ENCODE measurements at regions of chr1 and their contacts with region 1.

Region 1: GRCh38 chr1:117895482-117896114 is 33.8 kb downstream of the GDAP2 start:
- DNase-seq: peak; percentile 89
- ATAC-seq: peak; percentile 77
- H3K4me3 ChIP-seq: no peak overlapping the region
- H3K27ac ChIP-seq: no peak overlapping the region
- H3K4me1 ChIP-seq: no peaks in the 10 kb centered on the region
- H3K27me3 ChIP-seq: no peaks in the 10 kb centered on the region
- CTCF ChIP-seq: peak; percentile 91

Region 2: GRCh38 chr1:117512743-117513321 is 382.8 kb before region 1 on chr1:
- CTCF ChIA-PET with region 1: no interaction called
- POLR2A ChIA-PET with region 1: no interaction called
- intact Hi-C with region 1: loop called (anchors 2 kb)
- DNase-seq: peak; percentile 63
- ATAC-seq: peak; percentile 69
- H3K4me3 ChIP-seq: no peak overlapping the region
- H3K27ac ChIP-seq: no peak overlapping the region
- H3K4me1 ChIP-seq: no peaks in the 10 kb centered on the region
- H3K27me3 ChIP-seq: no peaks in the 10 kb centered on the region
- CTCF ChIP-seq: peak; percentile 83

Region 3: DNA sequence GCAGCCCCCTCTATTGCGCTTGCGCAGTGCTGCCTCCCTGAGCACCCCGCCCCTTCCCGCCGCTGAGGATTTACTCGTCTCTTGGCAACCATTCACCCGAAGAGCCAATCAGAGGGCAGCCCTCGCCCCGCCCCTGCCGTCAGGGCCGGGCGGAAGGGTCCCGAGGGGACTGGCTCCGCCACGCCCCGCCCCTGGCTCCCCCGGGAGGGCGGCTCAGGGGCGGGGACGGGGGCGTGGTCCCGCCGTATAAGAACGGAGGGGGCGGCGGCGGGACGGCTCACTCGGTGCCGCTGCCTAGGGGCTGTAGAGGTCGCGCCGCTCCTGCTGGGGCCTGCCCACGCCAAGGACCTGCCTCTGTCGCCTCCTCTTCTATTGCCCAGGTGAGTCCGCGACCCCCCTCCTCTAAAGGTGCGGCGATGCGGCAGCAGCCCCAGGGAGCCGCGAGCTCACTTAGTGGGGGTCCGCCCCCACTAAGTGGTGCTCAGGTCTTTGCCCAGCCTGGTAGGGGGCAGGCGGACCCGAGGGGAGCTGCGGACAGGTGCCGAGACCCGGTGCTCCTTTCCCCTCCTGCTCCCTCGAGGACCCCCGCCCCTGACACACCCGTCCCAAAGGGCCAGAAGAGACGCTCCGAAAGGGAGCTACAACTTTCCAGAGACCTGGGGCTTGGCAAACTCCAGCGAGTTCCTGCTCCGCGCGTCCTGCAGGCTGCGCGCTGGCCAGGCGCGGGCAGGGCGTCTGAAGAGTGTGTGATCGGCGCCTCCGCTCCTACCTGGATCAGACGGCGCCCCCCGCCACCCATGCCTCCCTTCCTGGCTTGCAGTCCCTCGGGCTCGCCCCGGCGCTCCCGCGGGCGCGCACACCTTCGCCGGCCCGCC is 289.6 kb before region 1 on chr1 and contains the start of gene TENT5C:
- CTCF ChIA-PET with region 1: no interaction called
- POLR2A ChIA-PET with region 1: no interaction called
- intact Hi-C with region 1: loop called (anchors 1 kb)
- DNase-seq: peak; percentile 99
- ATAC-seq: peak; percentile 82
- H3K4me3 ChIP-seq: peak within 1 kb of the TSS; percentile 97
- H3K27ac ChIP-seq: peak within 1 kb of the TSS; percentile 29
- H3K4me1 ChIP-seq: peaks cover 14% of the 10 kb centered on the region
- H3K27me3 ChIP-seq: no peaks in the 10 kb centered on the region
- CTCF ChIP-seq: no peak
- total RNA-seq, gene TENT5C: 2.2 and 2.4 TPM in 2 replicates

Region 4: GRCh38 chr1:117710710-117711109 is 184.9 kb before region 1 on chr1:
- CTCF ChIA-PET with region 1: no interaction called
- POLR2A ChIA-PET with region 1: no interaction called
- intact Hi-C with region 1: loop called (anchors 1 kb)
- DNase-seq: peak; percentile 44
- ATAC-seq: peak; percentile 43; the same call in 1 of the 2 replicates
- H3K4me3 ChIP-seq: no peak overlapping the region
- H3K27ac ChIP-seq: no peak overlapping the region
- H3K4me1 ChIP-seq: no peaks in the 10 kb centered on the region
- H3K27me3 ChIP-seq: no peaks in the 10 kb centered on the region
- CTCF ChIP-seq: peak; percentile 86

Region 5: DNA sequence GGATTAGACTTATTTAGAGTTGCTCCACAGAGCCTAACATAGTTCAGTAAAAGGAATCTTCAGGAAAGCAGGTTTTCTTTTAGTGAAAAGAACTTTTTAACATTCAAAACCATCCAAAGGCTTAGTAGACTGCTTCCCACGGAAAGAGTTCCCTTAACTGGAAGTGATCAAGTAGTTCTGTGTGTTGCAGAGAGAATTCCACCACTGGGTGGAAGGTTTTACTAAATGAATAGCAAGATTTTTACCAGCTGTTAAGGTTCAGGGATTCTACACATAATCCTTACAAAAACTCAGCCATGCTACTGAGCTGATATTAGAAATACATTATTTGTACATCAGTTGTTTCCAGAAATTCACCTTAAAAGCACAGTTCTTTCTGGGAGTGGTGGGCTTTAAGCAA is 85.8 kb before region 1 on chr1:
- CTCF ChIA-PET with region 1: interaction called, 3 read pairs
- POLR2A ChIA-PET with region 1: no interaction called
- intact Hi-C with region 1: loop called (anchors 1 kb)
- DNase-seq: no peak
- ATAC-seq: peak; percentile 58; the same call in 1 of the 2 replicates
- H3K4me3 ChIP-seq: no peak overlapping the region
- H3K27ac ChIP-seq: no peak overlapping the region
- H3K4me1 ChIP-seq: peaks cover 16% of the 10 kb centered on the region
- H3K27me3 ChIP-seq: no peaks in the 10 kb centered on the region
- CTCF ChIP-seq: no peak

Region 6: GRCh38 chr1:117842240-117843170 is 53.1 kb before region 1 on chr1:
- CTCF ChIA-PET with region 1: no interaction called
- POLR2A ChIA-PET with region 1: no interaction called
- intact Hi-C with region 1: loop called (anchors 1 kb)
- DNase-seq: peak; percentile 84
- ATAC-seq: peak; percentile 63
- H3K4me3 ChIP-seq: no peak overlapping the region
- H3K27ac ChIP-seq: peak overlapping the region; percentile 51
- H3K4me1 ChIP-seq: peaks cover 40% of the 10 kb centered on the region
- H3K27me3 ChIP-seq: no peaks in the 10 kb centered on the region
- CTCF ChIP-seq: peak; percentile 53

Region 7: DNA sequence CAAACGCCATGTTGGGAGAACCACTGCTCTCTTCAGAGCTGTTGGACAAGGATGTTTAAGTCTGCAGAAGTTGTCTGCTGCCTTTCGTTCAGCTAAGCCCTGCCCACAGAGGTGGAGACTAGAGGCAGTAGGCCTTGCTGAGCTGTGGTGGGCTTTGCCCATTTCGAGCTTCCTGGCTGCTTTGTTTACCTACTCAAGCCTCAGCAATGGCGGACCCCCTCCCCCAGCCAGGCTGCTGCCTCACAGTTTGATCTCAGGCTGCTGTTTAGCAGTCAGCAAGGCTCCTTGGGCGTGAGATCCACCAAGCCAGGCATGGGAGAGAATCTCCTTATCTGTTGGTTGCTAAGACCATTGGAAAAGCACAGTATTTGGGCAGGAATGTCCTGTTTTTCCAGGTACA is 108.7 kb after region 1 on chr1:
- CTCF ChIA-PET with region 1: no interaction called
- POLR2A ChIA-PET with region 1: no interaction called
- intact Hi-C with region 1: no loop called
- DNase-seq: no peak
- ATAC-seq: no peak
- H3K4me3 ChIP-seq: no peak overlapping the region
- H3K27ac ChIP-seq: no peak overlapping the region
- H3K4me1 ChIP-seq: no peaks in the 10 kb centered on the region
- H3K27me3 ChIP-seq: peaks cover 20% of the 10 kb centered on the region
- CTCF ChIP-seq: no peak